ENCODE measurements at regions of chr12 and their contacts with region 1.

Region 1: GRCh38 chr12:113005754-113006153 is 27.4 kb downstream of the OAS2 start:
- DNase-seq: no peak
- H3K4me3 ChIP-seq: no peak overlapping the region
- H3K27ac ChIP-seq: no peak overlapping the region
- H3K4me1 ChIP-seq: no peaks in the 10 kb centered on the region
- H3K27me3 ChIP-seq: peaks cover 0 to 7% (median 0%) of the 10 kb centered on the region in 4 experiments; a peak in 1 of 7 replicates
- CTCF ChIP-seq: peak in 2 of 3 experiments; percentile 48 to 55; a peak in 2 of 4 replicates
- EP300 ChIP-seq: no peak
- POLR2A ChIP-seq: no peak
- RAD21 ChIP-seq: peak; percentile 28 to 39; a peak in 3 of 4 replicates

Region 2: DNA sequence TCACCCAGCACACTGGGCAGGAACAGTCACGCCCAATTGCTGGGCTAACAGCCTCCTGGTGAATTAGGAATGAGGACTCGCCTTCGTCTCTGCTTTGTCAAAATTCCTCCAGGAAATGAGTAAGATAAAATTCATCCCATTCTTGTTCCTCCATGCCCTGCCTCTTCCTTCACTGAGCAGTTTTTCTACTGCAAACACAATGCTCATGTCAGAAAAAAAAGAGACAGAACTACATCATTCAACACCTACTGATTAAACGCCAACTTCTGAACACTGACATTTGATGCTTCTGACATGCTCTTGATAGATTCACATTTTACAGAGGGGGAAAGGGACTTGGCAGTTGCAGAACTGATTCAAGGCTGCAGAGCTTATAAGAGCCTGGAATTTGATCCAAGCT is 13.3 kb after region 1 on chr12:
- CTCF ChIA-PET with region 1: interaction called, 59 read pairs
- POLR2A ChIA-PET with region 1: no interaction called
- DNase-seq: no peak
- H3K4me3 ChIP-seq: no peak overlapping the region
- H3K27ac ChIP-seq: no peak overlapping the region
- H3K4me1 ChIP-seq: no peaks in the 10 kb centered on the region
- H3K27me3 ChIP-seq: no peaks in the 10 kb centered on the region; a peak in 1 of 7 replicates
- CTCF ChIP-seq: no peak
- EP300 ChIP-seq: no peak
- POLR2A ChIP-seq: no peak
- RAD21 ChIP-seq: no peak

Measured in H1 (cell line).